CD4-positive, alpha-beta memory T cell (primary cell): ENCODE measurements at regions of chr17 and their contacts with region 1.

Region 1: DNA sequence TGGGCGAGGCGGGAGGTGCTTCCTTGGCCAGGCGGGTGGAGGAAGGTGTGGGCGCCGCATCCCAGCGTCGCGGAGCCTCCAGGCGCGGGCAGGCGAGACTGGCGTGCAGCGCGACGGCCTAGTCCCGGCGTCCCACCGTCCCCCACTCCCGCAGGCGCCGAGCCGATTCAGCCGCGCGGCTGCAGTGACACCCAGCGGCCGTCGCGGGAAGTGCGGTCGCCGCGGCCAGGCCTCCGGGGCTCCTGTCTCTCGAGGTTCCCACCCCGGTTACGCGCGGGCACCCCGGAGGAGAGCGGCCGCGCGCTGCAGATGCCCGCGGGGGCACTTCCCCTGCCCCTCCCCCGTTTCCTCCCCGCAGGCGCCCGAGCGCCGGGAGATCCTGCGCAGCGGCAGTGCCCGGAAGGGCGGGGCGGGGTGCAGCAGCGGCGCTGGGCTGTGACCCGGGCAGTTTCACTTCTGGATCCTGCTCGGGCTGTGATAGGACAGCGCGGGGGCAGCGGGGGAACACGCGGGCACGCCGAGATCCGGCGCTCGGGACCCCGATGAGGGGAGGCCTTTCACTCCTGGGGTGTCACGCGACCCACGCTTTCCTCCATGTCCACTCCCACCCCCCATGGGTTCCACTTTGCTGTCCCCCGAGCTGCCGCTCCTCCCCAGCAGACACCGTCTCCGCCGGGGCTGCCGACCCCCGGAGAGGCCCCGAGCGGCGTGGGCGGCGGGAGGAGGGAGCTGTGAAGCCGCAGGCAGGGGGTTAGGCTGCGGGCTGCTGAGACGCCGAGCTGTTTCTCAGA is 16.6 kb downstream of the GRB7 start:
- DNase-seq: peak; percentile 96 to 99 (median 99)
- H3K4me3 ChIP-seq: peak overlapping the region; percentile 36 to 67
- H3K4me3 Mint-ChIP-seq: peak overlapping the region; percentile 67 to 97 (median 81)
- H3K27ac ChIP-seq: peak overlapping the region; percentile 90
- H3K27ac Mint-ChIP-seq: peak overlapping the region; percentile 96 to 100 (median 98)
- H3K4me1 ChIP-seq: peaks cover 57% of the 10 kb centered on the region
- H3K4me1 Mint-ChIP-seq: peaks cover 44 to 61% (median 53%) of the 10 kb centered on the region in 4 donors
- H3K27me3 ChIP-seq: no peaks in the 10 kb centered on the region
- H3K27me3 Mint-ChIP-seq: no peaks in the 10 kb centered on the region

Region 2: DNA sequence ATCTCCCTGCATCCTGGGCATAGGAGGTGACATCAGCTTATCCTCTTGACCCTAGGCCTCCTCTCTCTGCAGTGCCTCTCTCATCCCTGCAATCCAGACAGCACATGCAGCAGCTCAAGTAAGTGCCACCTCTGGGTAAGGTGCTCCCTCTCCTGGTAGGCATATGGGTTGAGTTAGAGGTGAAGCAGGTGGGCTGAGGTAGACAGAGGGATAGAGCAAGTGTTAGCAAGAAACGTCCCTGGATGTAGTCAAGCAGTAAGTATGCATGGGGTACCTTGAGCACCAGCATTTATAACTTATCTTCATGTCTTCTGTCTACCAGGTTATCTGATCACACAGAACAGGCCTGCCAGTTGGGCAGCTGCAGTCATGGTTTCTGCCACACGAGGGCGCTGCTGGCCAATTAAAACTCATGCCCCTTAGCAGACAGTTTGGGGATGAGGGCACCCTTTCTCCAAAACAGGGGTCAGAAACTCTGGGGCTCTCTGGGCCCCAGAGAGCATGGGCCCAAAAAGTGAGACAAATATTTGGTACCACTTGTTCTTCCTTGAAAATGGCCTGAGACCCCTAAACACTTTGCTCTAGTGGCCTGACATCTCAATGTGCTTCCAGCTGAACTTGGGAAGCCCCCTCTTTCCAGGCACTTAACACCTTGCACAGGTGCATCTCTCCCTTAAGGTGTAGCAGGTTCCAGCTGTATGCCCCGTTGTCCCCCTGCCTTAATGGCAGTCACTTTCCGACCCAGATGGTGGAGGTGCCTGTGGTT is 206.5 kb before region 1 on chr17:
- CTCF ChIA-PET with region 1: interaction called, 4 read pairs
- POLR2A ChIA-PET with region 1: no interaction called
- intact Hi-C with region 1: loop called (anchors 1 kb)
- DNase-seq: peak; percentile 57 to 71 (median 62)
- H3K4me3 ChIP-seq: no peak overlapping the region
- H3K4me3 Mint-ChIP-seq: no peak overlapping the region
- H3K27ac ChIP-seq: no peak overlapping the region
- H3K27ac Mint-ChIP-seq: no peak overlapping the region
- H3K4me1 ChIP-seq: no peaks in the 10 kb centered on the region
- H3K4me1 Mint-ChIP-seq: no peaks in the 10 kb centered on the region
- H3K27me3 ChIP-seq: no peaks in the 10 kb centered on the region
- H3K27me3 Mint-ChIP-seq: no peaks in the 10 kb centered on the region

Region 3: DNA sequence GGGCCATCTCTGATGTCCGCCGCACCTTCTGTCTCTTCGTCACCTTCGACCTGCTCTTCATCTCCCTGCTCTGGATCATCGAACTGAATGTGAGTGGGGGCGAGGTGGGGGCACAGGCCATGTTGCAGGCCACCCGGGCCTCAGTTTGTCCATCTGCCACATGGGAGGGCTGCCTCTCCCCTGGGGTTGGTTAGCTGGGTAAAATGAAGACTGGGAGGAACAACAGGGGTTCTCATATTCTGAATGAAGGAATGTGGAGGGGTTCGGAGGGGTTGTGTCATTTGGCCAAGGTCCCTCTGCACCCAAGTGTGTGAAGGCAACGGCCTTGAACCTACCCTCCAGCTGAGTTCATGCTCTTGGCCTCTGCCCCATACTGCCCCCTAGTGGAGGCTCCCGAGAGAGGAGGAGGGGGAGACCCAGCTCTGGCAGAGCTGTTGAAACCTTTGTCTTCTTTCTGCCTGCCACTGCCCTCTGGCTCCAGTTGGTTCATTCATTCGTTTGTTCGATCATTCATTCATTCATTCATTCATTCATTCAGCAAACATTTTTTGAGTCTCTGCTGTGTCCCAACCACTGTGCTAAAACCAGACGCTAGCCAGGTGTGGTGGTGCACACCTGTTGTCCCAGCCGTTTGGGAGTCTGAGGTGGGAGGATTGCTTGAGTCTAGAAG is 100.6 kb before region 1 on chr17:
- CTCF ChIA-PET with region 1: interaction called, 15 read pairs
- POLR2A ChIA-PET with region 1: no interaction called
- intact Hi-C with region 1: no loop called
- DNase-seq: peak; percentile 65 to 75 (median 73)
- H3K4me3 ChIP-seq: no peak overlapping the region
- H3K4me3 Mint-ChIP-seq: no peak overlapping the region
- H3K27ac ChIP-seq: no peak overlapping the region
- H3K27ac Mint-ChIP-seq: peak overlapping the region in 3 of 7 donors; percentile 69 to 78 (median 78)
- H3K4me1 ChIP-seq: peaks cover 10% of the 10 kb centered on the region
- H3K4me1 Mint-ChIP-seq: peaks cover 24 to 55% (median 27%) of the 10 kb centered on the region in 4 donors
- H3K27me3 ChIP-seq: no peaks in the 10 kb centered on the region
- H3K27me3 Mint-ChIP-seq: no peaks in the 10 kb centered on the region

Region 4: GRCh38 chr17:39777534-39778365 is 23.4 kb after region 1 on chr17:
- CTCF ChIA-PET with region 1: interaction called, 25 read pairs
- POLR2A ChIA-PET with region 1: interaction called, 89 read pairs
- intact Hi-C with region 1: loop called (anchors 1 kb)
- DNase-seq: peak in 4 of 5 donors; percentile 34 to 57 (median 48)
- H3K4me3 ChIP-seq: peak overlapping the region; percentile 64 to 74
- H3K4me3 Mint-ChIP-seq: peak overlapping the region; percentile 93 to 99 (median 96)
- H3K27ac ChIP-seq: peak overlapping the region; percentile 77
- H3K27ac Mint-ChIP-seq: peak overlapping the region; percentile 89 to 98 (median 95)
- H3K4me1 ChIP-seq: peaks cover 84% of the 10 kb centered on the region
- H3K4me1 Mint-ChIP-seq: peaks cover 51 to 88% (median 69%) of the 10 kb centered on the region in 4 donors
- H3K27me3 ChIP-seq: no peaks in the 10 kb centered on the region
- H3K27me3 Mint-ChIP-seq: no peaks in the 10 kb centered on the region

Region 5: DNA sequence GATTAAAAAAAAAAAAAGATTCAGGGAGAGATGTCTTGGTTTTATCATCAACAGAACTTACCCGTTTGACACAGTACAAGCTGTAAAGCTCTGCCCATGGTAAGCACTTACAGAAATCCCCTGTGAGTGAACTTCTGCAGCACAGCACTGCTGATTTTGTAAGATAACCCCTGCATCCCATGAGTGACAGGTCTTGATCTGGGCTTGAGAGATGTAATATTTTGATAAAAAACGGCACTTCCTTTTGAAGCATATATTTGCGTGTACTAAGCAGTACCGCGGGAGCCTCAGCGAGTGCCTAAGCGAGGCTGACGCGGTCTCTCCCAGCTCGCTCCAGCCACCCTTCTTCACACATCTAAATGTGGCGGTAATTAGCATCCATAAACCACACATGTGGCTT is 59.3 kb after region 1 on chr17:
- CTCF ChIA-PET with region 1: interaction called, 3 read pairs
- POLR2A ChIA-PET with region 1: interaction called, 45 read pairs
- intact Hi-C with region 1: loop called (anchors 2 kb)
- DNase-seq: peak; percentile 75 to 91 (median 82)
- H3K4me3 ChIP-seq: peak overlapping the region in 1 of 2 donors; percentile 16
- H3K4me3 Mint-ChIP-seq: peak overlapping the region; percentile 69 to 92 (median 77)
- H3K27ac ChIP-seq: peak overlapping the region; percentile 67
- H3K27ac Mint-ChIP-seq: peak overlapping the region; percentile 91 to 98 (median 95)
- H3K4me1 ChIP-seq: peaks cover 74% of the 10 kb centered on the region
- H3K4me1 Mint-ChIP-seq: peaks cover 55 to 69% (median 61%) of the 10 kb centered on the region in 4 donors
- H3K27me3 ChIP-seq: no peaks in the 10 kb centered on the region
- H3K27me3 Mint-ChIP-seq: no peaks in the 10 kb centered on the region

Region 6: DNA sequence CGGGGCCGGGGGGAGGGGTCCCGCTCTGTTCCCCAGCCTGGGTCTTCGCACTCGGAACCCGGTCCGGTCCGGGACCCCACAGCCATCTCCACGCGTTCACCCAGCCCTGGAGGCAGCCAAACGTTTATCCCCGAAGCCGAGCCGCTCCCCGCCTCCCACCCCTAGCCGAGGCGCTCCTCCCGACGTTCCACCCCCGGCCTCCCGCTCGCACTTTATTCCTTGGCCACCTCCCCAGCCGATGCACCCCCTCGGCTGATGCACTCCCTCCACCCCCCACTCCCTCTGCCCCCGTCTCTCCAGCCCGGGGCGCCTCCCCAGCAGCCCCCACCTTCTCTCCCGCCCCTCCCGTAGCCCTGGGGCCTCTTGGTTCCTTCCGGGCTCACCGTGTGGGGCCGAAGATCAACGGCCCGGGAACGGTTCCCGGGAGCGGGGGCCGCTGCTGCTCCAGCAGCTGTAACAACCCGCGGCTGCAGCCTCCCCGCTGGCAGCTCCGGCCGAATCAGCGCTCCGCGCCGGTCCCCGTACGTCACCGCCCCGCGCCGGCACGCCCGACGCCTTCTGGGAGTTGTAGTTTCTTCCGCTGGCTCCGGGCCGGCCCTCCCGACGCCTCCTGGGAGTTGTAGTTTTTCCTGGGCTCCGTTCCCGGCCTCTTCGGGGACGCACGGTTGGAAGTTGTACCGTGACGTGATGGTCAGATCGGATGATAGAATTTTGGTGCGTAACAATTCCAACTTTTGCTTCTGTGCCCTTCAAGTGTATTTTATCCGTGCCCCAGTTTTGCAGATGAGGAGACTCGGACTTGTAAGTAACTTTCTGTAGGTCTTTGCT is 173.0 kb after region 1 on chr17 and contains the starts of genes LRRC3C and ORMDL3:
- CTCF ChIA-PET with region 1: no interaction called
- POLR2A ChIA-PET with region 1: interaction called, 13 read pairs
- intact Hi-C with region 1: loop called (anchors 1 kb)
- DNase-seq: peak; percentile 87 to 92 (median 90)
- H3K4me3 ChIP-seq: peak within 1 kb of the TSS; percentile 79 to 89
- H3K4me3 Mint-ChIP-seq: peak within 1 kb of the TSS; percentile 83 to 99 (median 96)
- H3K27ac ChIP-seq: peak within 1 kb of the TSS; percentile 82
- H3K27ac Mint-ChIP-seq: peak within 1 kb of the TSS; percentile 93 to 99 (median 95)
- H3K4me1 ChIP-seq: peaks cover 50% of the 10 kb centered on the region
- H3K4me1 Mint-ChIP-seq: peaks cover 19 to 54% (median 41%) of the 10 kb centered on the region in 4 donors
- H3K27me3 ChIP-seq: no peaks in the 10 kb centered on the region
- H3K27me3 Mint-ChIP-seq: no peaks in the 10 kb centered on the region
- total RNA-seq, gene LRRC3C: not detected
- total RNA-seq, gene ORMDL3: 79.6 to 87.2 TPM

Region 7: GRCh38 chr17:40113110-40113906 is 359.0 kb after region 1 on chr17:
- CTCF ChIA-PET with region 1: no interaction called
- POLR2A ChIA-PET with region 1: no interaction called
- intact Hi-C with region 1: no loop called
- DNase-seq: peak; percentile 92 to 97 (median 93)
- H3K4me3 ChIP-seq: peak overlapping the region; percentile 47 to 64
- H3K4me3 Mint-ChIP-seq: peak overlapping the region; percentile 83 to 93 (median 86)
- H3K27ac ChIP-seq: peak overlapping the region; percentile 51
- H3K27ac Mint-ChIP-seq: peak overlapping the region; percentile 87 to 100 (median 95)
- H3K4me1 ChIP-seq: peaks cover 59% of the 10 kb centered on the region
- H3K4me1 Mint-ChIP-seq: peaks cover 40 to 60% (median 52%) of the 10 kb centered on the region in 4 donors
- H3K27me3 ChIP-seq: no peaks in the 10 kb centered on the region
- H3K27me3 Mint-ChIP-seq: no peaks in the 10 kb centered on the region